ENCODE measurements at regions of chr6 and their contacts with region 1.

Region 1: GRCh38 chr6:35240840-35241801 is 18.4 kb upstream of the ZNF76 start:
- DNase-seq: peak; percentile 78
- H3K4me3 ChIP-seq: no peak overlapping the region
- H3K27ac ChIP-seq: no peak overlapping the region
- H3K4me1 ChIP-seq: peaks cover 0 to 7% (median 5%) of the 10 kb centered on the region in 4 donors
- H3K27me3 ChIP-seq: no peaks in the 10 kb centered on the region
- CTCF ChIP-seq: peak; percentile 91 to 96 (median 94)
- EP300 ChIP-seq: no peak
- POLR2A ChIP-seq: no peak

Region 2: GRCh38 chr6:35139908-35140655 is 101.0 kb before region 1 on chr6:
- in situ Hi-C with region 1: loop called in 1 of 4 experiments (anchors 10 kb)
- intact Hi-C with region 1: loop called (anchors 10 kb)
- DNase-seq: peak; percentile 58
- H3K4me3 ChIP-seq: no peak overlapping the region
- H3K27ac ChIP-seq: no peak overlapping the region
- H3K4me1 ChIP-seq: peaks cover 0 to 23% (median 13%) of the 10 kb centered on the region in 4 donors
- H3K27me3 ChIP-seq: no peaks in the 10 kb centered on the region
- CTCF ChIP-seq: peak; percentile 80 to 91 (median 84)
- EP300 ChIP-seq: no peak
- POLR2A ChIP-seq: no peak

Measured in transverse colon (tissue), 4 donors.